GM13976 (cell line): ENCODE measurements at regions of chr3 and their contacts with region 1.

Region 1: GRCh38 chr3:161413127-161413849 is 42.0 kb upstream of the SPTSSB start:
- DNase-seq: no peak
- CTCF ChIP-seq: no peak

Region 2: GRCh38 chr3:161274719-161275298 is 138.5 kb before region 1 on chr3:
- in situ Hi-C with region 1: loop called (anchors 10 kb)
- DNase-seq: peak; percentile 32
- CTCF ChIP-seq: peak; percentile 42

Region 3: GRCh38 chr3:161644891-161645661 is 231.8 kb after region 1 on chr3:
- in situ Hi-C with region 1: no loop called
- DNase-seq: no peak
- CTCF ChIP-seq: no peak